ENCODE measurements at regions of chr17 and their contacts with region 1.

Region 1: GRCh38 chr17:43125133-43125966 is at the start of gene BRCA1:
- DNase-seq: peak; percentile 74
- H3K4me3 ChIP-seq: peak within 1 kb of the TSS; percentile 52 to 85 (median 62)
- H3K27ac ChIP-seq: peak within 1 kb of the TSS; percentile 84 to 91 (median 88)
- H3K4me1 ChIP-seq: peaks cover 6 to 57% (median 22%) of the 10 kb centered on the region in 3 donors
- H3K27me3 ChIP-seq: no peaks in the 10 kb centered on the region
- CTCF ChIP-seq: no peak
- POLR2A ChIP-seq: peak in 2 of 4 donors; percentile 20 to 58
- total RNA-seq, gene BRCA1: 6.3 to 20.7 (median 9.8) TPM

Region 2: DNA sequence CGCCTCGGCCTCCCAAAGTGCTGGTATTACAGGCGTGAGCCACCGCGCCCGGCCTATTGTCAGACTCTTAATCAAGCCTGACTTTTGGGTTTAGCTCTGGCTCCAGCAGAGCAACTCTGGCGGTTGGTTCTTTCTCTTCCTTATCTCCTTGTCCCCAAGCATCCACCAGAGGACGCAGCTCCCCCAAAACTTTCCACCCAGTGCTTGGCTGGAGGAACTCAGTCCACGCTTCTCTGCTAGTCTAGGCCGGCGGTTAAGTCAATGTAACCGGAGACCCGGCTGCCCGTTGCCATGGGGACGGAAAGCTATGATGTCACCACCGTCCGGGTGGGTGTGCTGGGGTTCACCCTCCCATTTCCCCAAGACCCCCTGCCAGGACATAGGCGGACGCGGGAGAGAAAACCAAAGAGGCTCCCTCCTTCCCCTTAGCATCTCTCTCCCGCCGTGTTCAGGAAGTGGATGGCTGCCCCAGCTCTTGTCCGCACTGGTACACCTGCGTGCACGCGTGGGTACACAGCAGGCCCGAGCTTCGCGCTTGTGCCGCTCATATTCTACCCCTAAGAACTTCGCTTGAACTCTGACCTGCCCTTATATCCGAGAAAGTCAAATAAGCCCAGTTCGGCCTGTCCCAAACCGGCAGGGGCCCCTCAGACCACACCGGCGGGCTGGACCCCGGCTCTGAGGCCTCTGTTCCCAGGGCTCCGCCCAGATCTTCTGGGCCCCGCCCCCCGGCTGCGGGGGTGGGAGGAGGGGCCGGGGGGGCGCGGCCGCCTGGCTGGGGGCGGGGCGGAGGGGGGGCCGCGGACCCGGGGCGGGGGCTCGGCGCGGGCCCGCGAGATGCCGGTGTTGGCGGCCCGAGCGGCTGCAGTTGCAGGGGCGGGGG is 100.7 kb before region 1 on chr17 and contains the start of gene RND2:
- intact Hi-C with region 1: loop called (anchors 10 kb)
- DNase-seq: peak; percentile 44
- H3K4me3 ChIP-seq: peak within 1 kb of the TSS; percentile 35 to 80 (median 60)
- H3K27ac ChIP-seq: peak within 1 kb of the TSS; percentile 48 to 87 (median 76)
- H3K4me1 ChIP-seq: peaks cover 18 to 45% (median 20%) of the 10 kb centered on the region in 3 donors
- H3K27me3 ChIP-seq: no peaks in the 10 kb centered on the region
- CTCF ChIP-seq: peak; percentile 50 to 82 (median 71)
- POLR2A ChIP-seq: no peak
- total RNA-seq, gene RND2: 0.30 to 0.76 (median 0.53) TPM in 3 of 4 donors, not detected in the other

Region 3: GRCh38 chr17:43170766-43171585 is 45.6 kb after region 1 on chr17 and contains the start of gene NBR1:
- intact Hi-C with region 1: loop called (anchors 5 kb)
- DNase-seq: peak; percentile 83
- H3K4me3 ChIP-seq: peak within 1 kb of the TSS; percentile 61 to 97 (median 82)
- H3K27ac ChIP-seq: peak within 1 kb of the TSS; percentile 94 to 100 (median 98)
- H3K4me1 ChIP-seq: peaks cover 25 to 61% (median 51%) of the 10 kb centered on the region in 3 donors
- H3K27me3 ChIP-seq: no peaks in the 10 kb centered on the region
- CTCF ChIP-seq: peak in 2 of 6 experiments; percentile 14 to 33
- POLR2A ChIP-seq: peak in 3 of 4 donors; percentile 70 to 92 (median 81)
- total RNA-seq, gene NBR1: 30.6 to 61.6 (median 42.0) TPM